B cell (primary cell): ENCODE measurements at regions of chr2 and their contacts with region 1.

Region 1: DNA sequence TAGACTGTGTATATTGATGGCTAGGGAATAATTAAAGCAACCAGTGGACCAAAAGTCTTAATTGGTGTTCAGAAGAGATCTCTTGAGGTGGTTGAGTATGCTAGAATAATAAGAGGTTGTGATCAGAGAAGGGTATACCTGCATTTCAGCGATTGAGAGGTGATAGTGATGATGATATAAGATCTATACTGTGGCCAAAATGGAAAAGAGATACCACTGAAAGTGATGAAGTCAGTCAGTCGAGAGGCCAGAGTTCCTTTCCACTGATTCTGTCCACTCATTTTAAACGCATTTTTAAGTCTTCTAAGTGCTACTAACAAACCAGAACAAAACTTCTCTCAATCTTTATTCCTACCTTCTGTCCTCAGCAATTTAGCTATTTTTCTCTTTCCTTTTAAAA is 32.9 kb downstream of the ACTR3 start:
- DNase-seq: no peak
- ATAC-seq: no peak
- H3K4me3 ChIP-seq: no peak overlapping the region
- H3K4me3 Mint-ChIP-seq: no peak overlapping the region
- H3K27ac ChIP-seq: peak overlapping the region; percentile 19 to 78
- H3K27ac Mint-ChIP-seq: no peak overlapping the region
- H3K4me1 ChIP-seq: peaks cover 27 to 39% of the 10 kb centered on the region in 2 donors
- H3K4me1 Mint-ChIP-seq: peaks cover 35% of the 10 kb centered on the region
- H3K27me3 ChIP-seq: no peaks in the 10 kb centered on the region
- H3K27me3 Mint-ChIP-seq: no peaks in the 10 kb centered on the region
- CTCF ChIP-seq: no peak

Region 2: DNA sequence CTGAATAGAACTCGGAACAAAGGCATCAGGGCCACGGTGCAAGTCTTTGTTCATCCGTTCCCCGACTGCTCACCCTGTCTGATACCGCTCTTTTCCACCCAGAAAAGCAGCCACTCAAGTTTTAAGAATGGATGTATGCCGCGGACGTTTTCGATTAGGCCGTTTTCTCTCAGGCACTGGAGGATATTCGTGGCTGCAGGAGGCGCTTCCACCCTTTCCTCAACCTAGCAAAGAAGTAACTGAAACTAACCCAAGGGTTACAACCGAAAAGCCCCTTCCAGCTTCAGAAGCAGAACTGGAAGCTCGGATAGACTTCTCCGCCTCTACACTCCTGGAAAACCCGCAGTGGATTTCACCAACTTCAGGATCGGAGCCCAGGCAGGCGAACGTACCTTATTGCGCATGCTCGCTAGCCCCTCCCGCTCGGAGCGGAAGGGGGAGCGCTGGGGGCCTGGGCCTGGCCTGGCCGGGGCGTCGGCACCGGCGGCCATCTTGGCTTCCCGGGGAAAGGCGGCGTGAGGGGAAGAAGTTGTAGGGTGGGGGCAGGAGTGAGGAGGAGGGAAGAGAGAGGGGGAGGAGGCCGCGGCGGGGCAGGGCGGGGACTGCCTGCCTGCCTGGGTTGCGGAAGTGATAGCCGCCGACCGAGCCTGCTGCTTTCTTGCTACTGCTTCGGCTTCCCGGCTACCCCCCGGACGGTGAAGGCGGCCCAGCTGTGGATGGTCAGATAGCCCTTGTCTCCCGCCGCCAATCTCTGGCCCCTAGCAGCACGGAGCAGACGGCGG is 33.1 kb before region 1 on chr2 and contains the start of gene ACTR3:
- CTCF ChIA-PET with region 1: no interaction called
- POLR2A ChIA-PET with region 1: no interaction called
- intact Hi-C with region 1: loop called (anchors 1 kb)
- DNase-seq: peak; percentile 100
- ATAC-seq: peak; percentile 82
- H3K4me3 ChIP-seq: peak within 1 kb of the TSS; percentile 79 to 96 (median 93)
- H3K4me3 Mint-ChIP-seq: peak within 1 kb of the TSS; percentile 99
- H3K27ac ChIP-seq: peak within 1 kb of the TSS; percentile 94 to 98
- H3K27ac Mint-ChIP-seq: peak within 1 kb of the TSS; percentile 98
- H3K4me1 ChIP-seq: peaks cover 63 to 66% of the 10 kb centered on the region in 2 donors
- H3K4me1 Mint-ChIP-seq: peaks cover 79% of the 10 kb centered on the region
- H3K27me3 ChIP-seq: no peaks in the 10 kb centered on the region
- H3K27me3 Mint-ChIP-seq: no peaks in the 10 kb centered on the region
- CTCF ChIP-seq: peak; percentile 16
- total RNA-seq, gene ACTR3: 240 and 249 TPM in 2 replicates

Region 3: DNA sequence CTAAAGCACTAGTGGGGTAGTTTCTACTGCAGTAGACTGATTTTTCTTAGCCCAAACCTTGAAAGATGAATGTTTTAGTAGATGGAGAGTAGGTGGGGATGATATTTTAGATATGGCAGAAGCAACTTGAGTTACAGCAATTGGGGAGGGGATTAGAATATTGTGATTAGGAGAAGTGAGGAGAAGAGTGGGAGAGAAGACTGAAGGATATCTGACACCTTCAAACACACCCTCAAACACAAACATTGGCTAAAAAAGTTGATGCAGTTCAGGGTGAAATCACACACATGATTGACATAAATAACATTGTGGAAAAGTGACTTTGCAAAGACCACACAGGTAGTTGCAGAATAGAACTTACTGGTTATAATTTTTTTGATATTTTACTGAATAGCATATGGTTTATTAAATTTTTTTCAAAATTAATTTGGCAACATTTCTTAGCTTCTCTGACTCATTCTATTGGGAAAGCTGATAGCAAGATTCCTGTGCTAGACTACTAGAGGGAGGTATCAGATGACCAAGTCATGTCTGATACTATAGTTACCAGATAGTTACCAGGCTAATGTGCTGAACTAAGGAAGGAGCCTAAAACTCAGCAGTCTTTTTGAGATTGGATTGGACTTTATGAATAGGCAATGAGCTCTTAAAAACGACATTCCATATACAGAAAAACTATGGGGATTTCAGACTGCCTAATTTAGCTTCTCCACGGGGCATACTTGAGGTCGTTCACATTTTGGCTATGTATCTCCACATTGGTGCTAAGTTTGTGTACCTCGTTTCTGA is 40.1 kb after region 1 on chr2:
- CTCF ChIA-PET with region 1: no interaction called
- POLR2A ChIA-PET with region 1: no interaction called
- intact Hi-C with region 1: loop called (anchors 5 kb)
- DNase-seq: no peak
- ATAC-seq: no peak
- H3K4me3 ChIP-seq: no peak overlapping the region
- H3K4me3 Mint-ChIP-seq: no peak overlapping the region
- H3K27ac ChIP-seq: peak overlapping the region in 1 of 2 donors; percentile 27
- H3K27ac Mint-ChIP-seq: no peak overlapping the region
- H3K4me1 ChIP-seq: peaks cover 0 to 9% of the 10 kb centered on the region in 2 donors
- H3K4me1 Mint-ChIP-seq: peaks cover 19% of the 10 kb centered on the region
- H3K27me3 ChIP-seq: no peaks in the 10 kb centered on the region
- H3K27me3 Mint-ChIP-seq: no peaks in the 10 kb centered on the region
- CTCF ChIP-seq: no peak

Region 4: DNA sequence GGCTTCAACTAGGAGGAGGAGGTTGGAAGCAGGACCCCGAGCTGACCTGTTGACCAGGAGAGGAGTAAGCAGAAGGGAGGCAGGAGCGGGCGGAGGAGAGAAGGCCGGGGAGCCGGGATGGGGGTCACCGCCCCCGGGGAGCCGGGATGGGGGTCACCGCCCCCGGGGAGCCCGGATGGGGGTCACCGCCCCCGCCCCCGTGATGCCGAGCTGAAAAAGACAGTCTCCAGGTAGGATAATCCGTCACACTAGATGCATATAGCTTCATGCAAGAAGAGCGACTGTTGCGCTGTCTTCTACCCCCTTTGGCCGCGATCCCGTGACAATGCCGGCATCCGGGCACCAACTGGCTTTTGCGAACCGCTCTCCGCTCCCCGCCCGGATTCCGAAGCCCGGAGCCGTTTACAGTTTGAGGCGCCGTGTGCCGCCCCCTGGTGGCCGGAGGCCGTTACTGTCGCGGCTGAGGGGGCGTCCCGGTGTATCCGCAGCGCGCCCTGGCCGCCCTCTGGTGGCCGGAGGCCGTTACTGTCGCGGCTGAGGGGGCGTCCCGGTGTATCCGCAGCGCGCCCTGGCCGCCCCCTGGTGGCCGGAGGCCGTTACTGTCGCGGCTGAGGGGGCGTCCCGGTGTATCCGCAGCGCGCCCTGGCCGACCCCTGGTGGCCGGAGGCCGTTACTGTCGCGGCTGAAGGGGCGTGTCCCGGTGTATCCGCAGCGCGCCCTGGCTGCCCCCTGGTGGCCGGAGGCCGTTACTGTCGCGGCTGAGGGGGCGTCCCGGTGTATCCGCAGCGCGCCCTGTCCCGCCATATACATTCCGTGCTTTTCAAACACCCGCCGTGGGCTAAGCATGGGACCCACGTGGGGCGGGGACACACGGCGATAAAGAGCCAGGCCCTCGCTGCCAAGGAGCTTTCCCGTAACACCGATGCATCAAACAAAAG is 56.7 kb after region 1 on chr2:
- CTCF ChIA-PET with region 1: no interaction called
- POLR2A ChIA-PET with region 1: no interaction called
- intact Hi-C with region 1: no loop called
- DNase-seq: peak; percentile 63
- ATAC-seq: peak; percentile 49
- H3K4me3 ChIP-seq: no peak overlapping the region
- H3K4me3 Mint-ChIP-seq: no peak overlapping the region
- H3K27ac ChIP-seq: no peak overlapping the region
- H3K27ac Mint-ChIP-seq: peak overlapping the region; percentile 51
- H3K4me1 ChIP-seq: no peaks in the 10 kb centered on the region
- H3K4me1 Mint-ChIP-seq: peaks cover 2% of the 10 kb centered on the region
- H3K27me3 ChIP-seq: no peaks in the 10 kb centered on the region
- H3K27me3 Mint-ChIP-seq: no peaks in the 10 kb centered on the region
- CTCF ChIP-seq: peak; percentile 86

Region 5: GRCh38 chr2:114011713-114012112 is 88.9 kb after region 1 on chr2:
- CTCF ChIA-PET with region 1: no interaction called
- POLR2A ChIA-PET with region 1: no interaction called
- intact Hi-C with region 1: no loop called
- DNase-seq: no peak
- ATAC-seq: no peak
- H3K4me3 ChIP-seq: no peak overlapping the region
- H3K4me3 Mint-ChIP-seq: no peak overlapping the region
- H3K27ac ChIP-seq: no peak overlapping the region
- H3K27ac Mint-ChIP-seq: no peak overlapping the region
- H3K4me1 ChIP-seq: no peaks in the 10 kb centered on the region
- H3K4me1 Mint-ChIP-seq: peaks cover 2% of the 10 kb centered on the region
- H3K27me3 ChIP-seq: no peaks in the 10 kb centered on the region
- H3K27me3 Mint-ChIP-seq: peaks cover 6% of the 10 kb centered on the region
- CTCF ChIP-seq: no peak

Region 6: GRCh38 chr2:114294741-114295140 is 372.0 kb after region 1 on chr2:
- CTCF ChIA-PET with region 1: no interaction called
- POLR2A ChIA-PET with region 1: no interaction called
- intact Hi-C with region 1: no loop called
- DNase-seq: no peak
- ATAC-seq: no peak
- H3K4me3 ChIP-seq: no peak overlapping the region
- H3K4me3 Mint-ChIP-seq: no peak overlapping the region
- H3K27ac ChIP-seq: no peak overlapping the region
- H3K27ac Mint-ChIP-seq: no peak overlapping the region
- H3K4me1 ChIP-seq: no peaks in the 10 kb centered on the region
- H3K4me1 Mint-ChIP-seq: no peaks in the 10 kb centered on the region
- H3K27me3 ChIP-seq: peaks cover 0 to 7% (median 0%) of the 10 kb centered on the region in 4 experiments
- H3K27me3 Mint-ChIP-seq: peaks cover 20% of the 10 kb centered on the region
- CTCF ChIP-seq: no peak